Ovary (tissue), 10 donors: ENCODE measurements at regions of chr19 and their contacts with region 1.

Region 1: DNA sequence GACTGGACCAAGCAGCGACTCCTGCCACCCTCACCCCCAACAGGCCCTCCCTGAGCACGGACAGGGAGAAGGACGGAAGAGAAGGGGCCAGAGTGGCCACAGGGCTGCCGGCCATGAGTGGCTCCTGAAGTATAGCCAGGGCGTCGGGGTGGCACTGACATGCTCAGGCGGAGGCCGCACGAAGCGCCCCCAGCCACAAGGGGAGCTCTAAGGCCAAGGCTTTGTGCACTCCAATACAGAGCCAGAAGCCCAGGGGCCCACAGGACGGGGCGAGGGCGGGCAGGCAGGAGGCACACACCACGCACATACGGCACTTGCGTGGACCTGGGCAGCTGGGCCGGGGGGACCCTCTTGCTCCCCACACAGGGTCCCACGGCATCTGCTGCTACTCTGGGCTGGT is 52.0 kb downstream of the KLF2 start:
- DNase-seq: peak in 2 of 5 donors; percentile 29 to 52
- H3K4me3 ChIP-seq: no peak overlapping the region
- H3K27ac ChIP-seq: no peak overlapping the region
- H3K4me1 ChIP-seq: peaks cover 19% of the 10 kb centered on the region
- H3K27me3 ChIP-seq: no peaks in the 10 kb centered on the region
- CTCF ChIP-seq: no peak
- EP300 ChIP-seq: no peak
- POLR2A ChIP-seq: no peak

Region 2: DNA sequence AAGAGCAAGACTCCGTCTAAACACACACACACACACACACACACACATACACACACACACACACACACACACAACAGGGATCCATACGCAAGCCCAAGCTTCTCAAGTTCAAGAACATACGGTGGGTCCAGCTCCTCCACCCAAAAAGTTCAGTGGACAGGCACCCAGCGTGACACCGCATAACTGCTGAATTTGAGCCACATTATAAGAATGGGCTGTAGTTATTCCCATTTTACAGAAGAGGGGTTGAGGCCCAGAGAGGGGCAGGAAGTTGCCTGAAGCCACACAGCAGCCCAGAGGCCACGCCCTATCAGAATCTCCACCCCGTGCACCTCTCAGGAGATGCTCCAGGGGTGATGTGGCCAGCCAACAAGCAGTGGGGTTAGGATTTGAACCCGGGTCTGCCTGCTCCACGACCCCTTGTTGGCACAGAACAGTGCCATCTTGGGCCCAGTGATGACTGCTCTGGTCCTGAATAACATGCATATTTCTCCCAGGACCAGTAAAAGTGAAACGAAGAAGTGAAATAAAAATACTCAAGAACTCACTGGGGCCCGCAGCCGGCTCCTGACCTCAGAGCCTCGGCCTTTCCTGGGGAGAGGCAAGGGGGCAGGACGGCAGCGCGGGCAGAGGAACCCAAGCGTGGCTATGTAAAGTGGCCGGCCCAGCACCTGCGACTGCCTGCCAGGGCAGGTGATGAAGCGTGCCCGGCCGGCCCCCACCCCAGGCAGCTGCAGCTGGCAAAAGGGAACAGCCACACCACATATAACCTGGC is 117.1 kb before region 1 on chr19:
- intact Hi-C with region 1: loop called in 1 of 4 experiments (anchors 5 kb)
- DNase-seq: no peak
- H3K4me3 ChIP-seq: no peak overlapping the region
- H3K27ac ChIP-seq: no peak overlapping the region
- H3K4me1 ChIP-seq: no peaks in the 10 kb centered on the region
- H3K27me3 ChIP-seq: no peaks in the 10 kb centered on the region
- CTCF ChIP-seq: no peak
- EP300 ChIP-seq: no peak
- POLR2A ChIP-seq: no peak